Activated naive CD4-positive, alpha-beta T cell treated with anti-CD3 and anti-CD28 coated beads, Interleukin-2, amount 10 ng/mL, durations not matched to agents 7 days and 5 days (primary cell): ENCODE measurements at regions of chr9 and their contacts with region 1.

Region 1: DNA sequence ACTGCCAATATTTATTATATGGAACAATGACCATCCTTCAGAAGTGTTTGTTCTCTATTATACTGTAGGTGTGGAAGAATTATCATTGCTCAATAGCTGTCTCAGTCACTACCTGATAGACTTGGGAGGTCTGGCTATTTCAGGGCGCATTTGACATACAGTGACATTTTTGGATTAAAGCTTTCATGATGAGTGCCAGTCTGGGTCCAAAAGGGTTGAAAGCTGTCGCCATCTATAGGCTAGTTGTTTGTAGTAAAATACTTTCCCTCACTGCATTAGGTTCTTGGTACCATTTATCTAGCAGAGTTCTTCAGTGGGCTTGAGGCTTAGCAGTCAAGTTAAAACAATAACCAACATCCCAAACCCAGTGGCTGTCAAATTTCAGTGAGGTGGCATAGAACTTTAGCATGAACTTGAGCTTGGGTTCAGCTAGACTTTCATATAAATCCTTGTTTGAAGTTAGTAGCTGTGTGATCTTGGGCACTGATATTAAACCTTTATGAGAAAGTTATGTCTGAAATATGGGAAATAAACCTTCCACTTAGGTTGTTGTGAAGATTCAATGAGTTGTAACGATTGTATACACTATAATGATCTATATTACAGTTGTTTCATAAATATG is 110.5 kb upstream of the CDKN2B start:
- DNase-seq: peak; percentile 49
- H3K4me3 Mint-ChIP-seq: no peak overlapping the region
- H3K27ac Mint-ChIP-seq: no peak overlapping the region
- H3K4me1 Mint-ChIP-seq: peaks cover 35% of the 10 kb centered on the region
- H3K27me3 Mint-ChIP-seq: peaks cover 38% of the 10 kb centered on the region

Region 2: GRCh38 chr9:21812946-21813568 is 306.6 kb before region 1 on chr9:
- CTCF ChIA-PET with region 1: interaction called, 30 read pairs
- DNase-seq: peak; percentile 74
- H3K4me3 Mint-ChIP-seq: no peak overlapping the region
- H3K27ac Mint-ChIP-seq: peak overlapping the region; percentile 44
- H3K4me1 Mint-ChIP-seq: peaks cover 16% of the 10 kb centered on the region
- H3K27me3 Mint-ChIP-seq: no peaks in the 10 kb centered on the region

Region 3: DNA sequence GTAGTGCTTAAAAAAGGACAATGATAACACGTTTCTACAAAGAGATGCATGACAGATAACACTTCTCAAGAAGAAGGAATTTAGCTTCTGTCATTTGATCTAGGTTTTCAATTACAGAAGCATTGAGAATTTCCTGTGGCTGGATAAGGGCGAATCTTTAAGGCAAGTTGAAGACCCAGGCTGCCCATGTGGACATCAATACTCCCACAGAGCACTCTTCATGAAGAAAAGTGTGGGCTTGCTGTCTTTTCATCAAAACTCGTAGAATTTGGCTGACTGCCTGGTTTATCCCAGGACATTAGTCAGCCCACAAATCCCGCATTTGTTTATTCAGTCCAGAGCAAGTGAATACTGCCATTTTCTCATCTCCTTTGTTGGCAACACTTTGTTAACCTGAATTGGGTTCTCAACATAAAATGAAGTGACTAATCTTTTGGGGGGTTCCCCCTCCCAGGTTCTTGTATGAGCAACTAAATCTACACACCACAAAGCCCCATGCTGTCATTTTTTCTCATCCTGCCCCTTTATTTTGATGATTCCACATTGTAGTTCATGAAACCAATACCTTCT is 67.2 kb before region 1 on chr9:
- CTCF ChIA-PET with region 1: interaction called, 10 read pairs
- DNase-seq: peak; percentile 34
- H3K4me3 Mint-ChIP-seq: no peak overlapping the region
- H3K27ac Mint-ChIP-seq: peak overlapping the region; percentile 65
- H3K4me1 Mint-ChIP-seq: peaks cover 61% of the 10 kb centered on the region
- H3K27me3 Mint-ChIP-seq: peaks cover 15% of the 10 kb centered on the region

Region 4: DNA sequence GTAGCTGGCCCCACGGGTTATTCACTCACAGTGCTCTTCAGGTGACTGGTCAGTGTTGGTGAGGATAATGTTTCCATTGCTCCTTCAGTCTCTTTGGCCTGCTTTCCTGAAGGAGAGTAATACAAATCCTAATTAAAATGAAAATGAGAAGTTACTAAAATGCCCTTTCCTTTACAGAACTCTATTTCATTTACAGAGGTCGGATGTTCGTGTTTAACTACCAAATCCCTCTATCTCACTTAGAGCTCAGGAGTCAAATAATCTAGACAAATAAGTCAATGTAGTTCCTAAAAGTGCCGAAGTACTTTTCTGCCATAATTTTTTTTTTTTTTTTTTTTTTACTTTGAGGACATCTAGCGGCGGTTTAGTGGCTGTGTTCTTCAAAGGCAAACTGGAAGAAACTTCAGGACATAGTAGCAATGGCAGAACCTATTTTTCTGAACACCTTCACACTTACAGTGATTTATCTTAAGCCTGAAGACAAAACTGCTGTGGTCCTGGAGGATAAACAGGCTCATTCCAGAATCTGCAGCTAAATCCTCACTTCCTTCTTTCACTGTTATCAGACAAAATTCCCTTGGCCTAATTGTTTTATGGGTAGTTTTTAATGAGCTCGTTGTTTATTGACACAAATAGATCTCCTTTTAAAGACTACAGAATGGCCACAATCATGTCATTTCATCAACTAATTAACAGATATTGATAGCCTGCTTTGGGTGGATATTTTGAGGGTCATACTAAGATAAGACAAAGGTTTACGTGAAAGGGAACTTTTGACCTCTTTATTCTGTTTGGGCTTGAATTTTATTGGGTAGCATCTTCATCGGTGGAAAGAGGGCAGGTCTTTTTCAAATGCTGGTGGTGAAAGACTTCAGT is 119.4 kb after region 1 on chr9:
- CTCF ChIA-PET with region 1: interaction called, 11 read pairs
- DNase-seq: no peak
- H3K4me3 Mint-ChIP-seq: no peak overlapping the region
- H3K27ac Mint-ChIP-seq: no peak overlapping the region
- H3K4me1 Mint-ChIP-seq: peaks cover 42% of the 10 kb centered on the region
- H3K27me3 Mint-ChIP-seq: peaks cover 28% of the 10 kb centered on the region